ENCODE measurements at regions of chr19 and their contacts with region 1.

Region 1: DNA sequence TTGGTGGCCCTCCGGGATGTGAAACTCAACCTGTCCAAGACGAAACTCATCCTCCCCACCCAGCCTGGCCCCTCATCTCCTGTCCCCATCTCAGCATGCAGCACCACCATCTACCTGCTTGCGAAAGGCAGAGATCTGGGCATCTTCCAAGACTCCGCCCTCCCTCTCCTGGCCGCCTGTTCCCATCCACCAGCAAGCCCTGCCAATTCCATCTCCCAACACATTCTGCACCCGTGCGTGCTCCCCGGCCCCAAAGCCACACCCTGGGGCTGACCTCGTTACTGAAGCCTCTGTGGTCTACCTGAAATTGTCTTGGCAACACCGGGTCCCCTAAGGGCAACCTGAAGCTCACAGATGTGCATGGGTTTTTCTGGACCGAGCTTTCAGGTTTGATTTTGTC is 13.2 kb upstream of the CAMSAP3 start:
- DNase-seq: no peak
- H3K4me3 ChIP-seq: no peak overlapping the region
- H3K27ac ChIP-seq: no peak overlapping the region
- H3K27me3 ChIP-seq: no peaks in the 10 kb centered on the region
- CTCF ChIP-seq: no peak

Region 2: GRCh38 chr19:7442423-7442822 is 140.0 kb before region 1 on chr19:
- intact Hi-C with region 1: no loop called
- DNase-seq: peak in 6 of 10 donors; percentile 9 to 66 (median 46)
- H3K4me3 ChIP-seq: peak overlapping the region in 12 of 59 donors; percentile 5 to 46 (median 20)
- H3K27ac ChIP-seq: peak overlapping the region in 57 of 59 donors; percentile 17 to 96 (median 83)
- H3K27me3 ChIP-seq: no peaks in the 10 kb centered on the region
- CTCF ChIP-seq: no peak

Region 3: GRCh38 chr19:7488736-7489353 is 93.6 kb before region 1 on chr19 and contains the start of gene PEX11G:
- intact Hi-C with region 1: no loop called
- DNase-seq: peak; percentile 83 to 95 (median 89)
- H3K4me3 ChIP-seq: peak within 1 kb of the TSS; percentile 41 to 96 (median 74)
- H3K27ac ChIP-seq: peak within 1 kb of the TSS; percentile 77 to 98 (median 94)
- H3K27me3 ChIP-seq: no peaks in the 10 kb centered on the region
- CTCF ChIP-seq: peak in 10 of 56 donors; percentile 9 to 49 (median 25)
- total RNA-seq, gene PEX11G: 0.77 to 8.8 (median 3.2) TPM

Region 4: GRCh38 chr19:7783991-7784421 is 201.6 kb after region 1 on chr19:
- intact Hi-C with region 1: loop called in 1 of 2 experiments (anchors 10 kb)
- DNase-seq: peak in 1 of 10 donors; percentile 24
- H3K4me3 ChIP-seq: no peak overlapping the region
- H3K27ac ChIP-seq: no peak overlapping the region
- H3K27me3 ChIP-seq: peaks cover 0 to 28% (median 12%) of the 10 kb centered on the region in 45 donors
- CTCF ChIP-seq: no peak

Region 5: DNA sequence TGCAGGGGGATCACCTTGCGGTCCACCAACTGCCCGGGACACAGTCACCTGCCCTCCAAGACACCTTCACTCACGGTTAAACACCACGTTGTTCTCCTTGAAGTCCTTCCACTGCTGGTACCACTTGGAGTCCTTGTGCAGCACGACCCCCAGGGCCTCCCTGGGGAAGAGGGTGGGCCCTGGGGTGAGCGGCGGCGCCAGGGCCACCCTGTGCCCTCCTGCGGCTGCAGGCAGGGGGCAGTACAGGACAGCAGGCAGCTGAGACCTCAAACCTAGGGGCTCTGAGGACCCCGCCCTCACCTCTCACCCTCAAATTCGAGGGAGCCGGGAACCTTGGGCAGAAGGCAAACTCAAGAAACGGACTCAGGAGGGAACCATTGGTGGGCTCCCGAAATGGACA is 351.0 kb after region 1 on chr19:
- intact Hi-C with region 1: no loop called
- DNase-seq: no peak
- H3K4me3 ChIP-seq: no peak overlapping the region
- H3K27ac ChIP-seq: peak overlapping the region in 9 of 59 donors; percentile 2 to 93 (median 22)
- H3K27me3 ChIP-seq: no peaks in the 10 kb centered on the region
- CTCF ChIP-seq: peak in 15 of 56 donors; percentile 8 to 35 (median 20)

Measured in dorsolateral prefrontal cortex (tissue), 120 donors.